MCF 10A (cell line): ENCODE measurements at regions of chr3 and their contacts with region 1.

Region 1: DNA sequence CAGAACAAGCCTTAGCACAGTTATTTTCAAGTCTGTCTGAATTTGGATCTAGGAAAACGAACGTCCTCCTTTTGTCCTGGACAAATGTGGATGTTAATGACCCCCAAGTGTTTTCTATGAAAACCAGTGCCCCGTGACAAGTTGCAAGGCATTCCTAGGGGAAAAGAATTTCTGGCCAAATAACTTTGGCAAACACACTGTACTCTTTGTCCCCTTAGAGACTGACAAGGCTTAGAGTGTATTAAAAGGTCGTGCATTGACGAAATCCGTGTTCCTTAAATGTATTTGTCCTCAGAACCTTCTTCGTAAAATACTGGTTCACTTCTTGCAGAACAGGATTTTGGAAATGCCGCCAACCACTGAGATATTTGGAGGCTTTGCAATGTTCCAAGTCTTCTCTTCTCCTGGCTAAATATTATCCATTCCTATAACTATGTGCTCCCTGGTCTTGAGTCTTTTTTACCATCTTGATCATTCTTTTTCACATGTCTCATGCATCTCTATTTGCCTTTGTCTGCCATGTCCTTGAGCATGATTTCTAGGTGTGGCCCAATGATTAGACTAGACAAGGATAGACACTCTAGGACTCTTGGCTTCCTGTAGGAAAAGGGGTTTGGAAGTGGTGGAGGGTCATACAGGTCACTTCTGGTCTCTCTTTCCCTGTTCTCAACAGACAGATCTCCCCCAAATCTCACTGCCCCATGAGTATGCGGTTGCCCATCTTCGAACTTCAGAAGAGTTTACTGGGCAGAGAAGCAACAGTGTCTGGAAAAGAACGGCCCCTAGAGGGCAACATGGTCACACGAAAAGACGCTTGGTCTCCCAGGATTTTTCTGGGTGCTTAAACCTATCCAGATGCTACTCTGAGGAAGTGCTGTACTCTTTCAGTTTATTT is 117.5 kb downstream of the EDEM1 start:
- DNase-seq: peak; percentile 63
- H3K4me3 Mint-ChIP-seq: no peak overlapping the region
- H3K27ac Mint-ChIP-seq: no peak overlapping the region
- H3K4me1 Mint-ChIP-seq: no peaks in the 10 kb centered on the region
- H3K27me3 Mint-ChIP-seq: no peaks in the 10 kb centered on the region
- CTCF ChIP-seq: peak; percentile 53

Region 2: GRCh38 chr3:5250467-5251195 is 54.4 kb before region 1 on chr3:
- CTCF ChIA-PET with region 1: no interaction called
- POLR2A ChIA-PET with region 1: no interaction called
- intact Hi-C with region 1: no loop called
- DNase-seq: peak; percentile 34
- H3K4me3 Mint-ChIP-seq: peak overlapping the region; percentile 75
- H3K27ac Mint-ChIP-seq: peak overlapping the region; percentile 63
- H3K4me1 Mint-ChIP-seq: peaks cover 4% of the 10 kb centered on the region
- H3K27me3 Mint-ChIP-seq: no peaks in the 10 kb centered on the region
- CTCF ChIP-seq: no peak

Region 3: DNA sequence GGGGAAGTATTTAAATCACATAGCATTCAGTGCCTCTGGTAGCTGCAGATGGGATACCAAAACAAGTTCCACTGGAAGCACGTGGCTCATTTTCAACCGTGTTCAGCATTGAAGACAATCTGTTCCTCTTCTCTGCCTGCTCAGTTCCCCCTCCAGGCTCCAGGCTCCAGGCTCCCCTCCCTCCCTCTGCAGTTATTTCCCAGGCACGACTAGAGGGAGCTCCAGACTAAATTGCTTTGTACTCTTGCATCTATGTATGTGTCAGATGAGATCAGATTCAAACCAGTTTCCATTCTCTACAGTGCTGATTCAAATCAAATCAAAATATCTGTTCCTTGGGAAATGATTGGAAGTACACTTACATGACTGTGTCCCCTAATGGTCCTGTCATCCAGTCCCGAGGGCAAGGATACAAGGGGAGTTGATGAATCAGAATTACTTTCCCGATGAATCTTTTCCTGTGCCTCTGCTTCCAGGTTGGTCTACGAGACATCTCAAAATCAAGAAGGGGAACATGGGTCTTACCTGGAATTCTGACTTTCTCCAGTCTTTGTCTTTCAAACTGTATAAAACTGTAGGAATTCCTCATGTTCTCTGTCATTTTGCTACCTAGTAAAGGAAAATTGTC is 482.9 kb after region 1 on chr3:
- CTCF ChIA-PET with region 1: no interaction called
- POLR2A ChIA-PET with region 1: no interaction called
- intact Hi-C with region 1: loop called (anchors 5 kb)
- DNase-seq: peak; percentile 16
- H3K4me3 Mint-ChIP-seq: no peak overlapping the region
- H3K27ac Mint-ChIP-seq: no peak overlapping the region
- H3K4me1 Mint-ChIP-seq: no peaks in the 10 kb centered on the region
- H3K27me3 Mint-ChIP-seq: no peaks in the 10 kb centered on the region
- CTCF ChIP-seq: peak; percentile 40

Region 4: GRCh38 chr3:5799398-5799797 is 494.4 kb after region 1 on chr3:
- CTCF ChIA-PET with region 1: no interaction called
- POLR2A ChIA-PET with region 1: no interaction called
- intact Hi-C with region 1: no loop called
- DNase-seq: no peak
- H3K4me3 Mint-ChIP-seq: no peak overlapping the region
- H3K27ac Mint-ChIP-seq: no peak overlapping the region
- H3K4me1 Mint-ChIP-seq: peaks cover 7% of the 10 kb centered on the region
- H3K27me3 Mint-ChIP-seq: no peaks in the 10 kb centered on the region
- CTCF ChIP-seq: peak; percentile 28